ENCODE measurements at regions of chr9 and their contacts with region 1.

Region 1: DNA sequence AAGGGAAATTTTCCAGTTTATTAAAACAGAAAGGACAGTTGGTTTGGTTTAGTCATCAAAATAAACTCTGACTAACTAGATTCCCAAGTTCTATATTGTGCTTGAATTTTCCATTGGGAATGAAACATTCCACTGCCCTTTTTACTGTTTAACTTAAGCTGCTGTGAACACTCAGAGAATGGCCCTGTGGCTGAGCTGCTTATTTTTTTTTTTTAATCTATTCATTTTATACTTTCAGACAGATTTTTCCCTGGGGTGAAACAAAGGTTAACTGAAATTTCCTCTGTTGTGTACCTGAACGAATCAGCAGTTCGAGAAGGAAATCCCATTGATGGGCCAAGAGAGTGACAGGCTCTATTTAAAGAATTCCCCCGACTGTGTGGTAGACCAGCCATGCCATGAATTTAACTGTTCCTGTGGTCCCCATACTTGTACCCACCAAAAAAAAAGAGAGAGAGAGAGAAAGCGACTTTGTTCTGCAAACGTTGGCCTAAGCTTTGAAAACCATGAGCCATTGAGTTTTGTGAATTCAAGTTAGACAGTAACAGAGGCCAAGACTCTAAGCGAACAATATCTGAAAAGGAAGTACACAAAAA is 138.7 kb upstream of the GRHPR start:
- DNase-seq: no peak
- ATAC-seq: no peak
- H3K4me3 ChIP-seq: no peak overlapping the region
- H3K4me3 Mint-ChIP-seq: no peak overlapping the region
- H3K27ac ChIP-seq: no peak overlapping the region
- H3K27ac Mint-ChIP-seq: peak overlapping the region; percentile 55
- H3K4me1 ChIP-seq: no peaks in the 10 kb centered on the region
- H3K4me1 Mint-ChIP-seq: peaks cover 22% of the 10 kb centered on the region
- H3K27me3 ChIP-seq: no peaks in the 10 kb centered on the region
- H3K27me3 Mint-ChIP-seq: no peaks in the 10 kb centered on the region
- CTCF ChIP-seq: no peak

Region 2: GRCh38 chr9:37229882-37230487 is 53.8 kb before region 1 on chr9:
- CTCF ChIA-PET with region 1: no interaction called
- POLR2A ChIA-PET with region 1: no interaction called
- intact Hi-C with region 1: no loop called
- DNase-seq: no peak
- ATAC-seq: no peak
- H3K4me3 ChIP-seq: no peak overlapping the region
- H3K4me3 Mint-ChIP-seq: no peak overlapping the region
- H3K27ac ChIP-seq: no peak overlapping the region
- H3K27ac Mint-ChIP-seq: no peak overlapping the region
- H3K4me1 ChIP-seq: no peaks in the 10 kb centered on the region
- H3K4me1 Mint-ChIP-seq: peaks cover 23% of the 10 kb centered on the region
- H3K27me3 ChIP-seq: no peaks in the 10 kb centered on the region
- H3K27me3 Mint-ChIP-seq: no peaks in the 10 kb centered on the region
- CTCF ChIP-seq: no peak

Region 3: GRCh38 chr9:37243588-37244345 is 40.1 kb before region 1 on chr9:
- CTCF ChIA-PET with region 1: interaction called, 3 read pairs
- POLR2A ChIA-PET with region 1: no interaction called
- intact Hi-C with region 1: loop called in 1 of 2 experiments (anchors 5 kb)
- DNase-seq: no peak
- ATAC-seq: no peak
- H3K4me3 ChIP-seq: no peak overlapping the region
- H3K4me3 Mint-ChIP-seq: no peak overlapping the region
- H3K27ac ChIP-seq: no peak overlapping the region
- H3K27ac Mint-ChIP-seq: no peak overlapping the region
- H3K4me1 ChIP-seq: no peaks in the 10 kb centered on the region
- H3K4me1 Mint-ChIP-seq: peaks cover 20% of the 10 kb centered on the region
- H3K27me3 ChIP-seq: no peaks in the 10 kb centered on the region
- H3K27me3 Mint-ChIP-seq: no peaks in the 10 kb centered on the region
- CTCF ChIP-seq: no peak